ENCODE measurements at regions of chr3 and their contacts with region 1.

Region 1: GRCh38 chr3:45688882-45689756 is at the start of gene SACM1L:
- DNase-seq: peak; percentile 96
- H3K4me3 Mint-ChIP-seq: peak within 1 kb of the TSS; percentile 95
- H3K27ac Mint-ChIP-seq: peak within 1 kb of the TSS; percentile 100
- H3K4me1 Mint-ChIP-seq: peaks cover 59% of the 10 kb centered on the region
- H3K27me3 Mint-ChIP-seq: peaks cover 4% of the 10 kb centered on the region
- total RNA-seq, gene SACM1L: 112 and 114 TPM in 2 replicates

Region 2: DNA sequence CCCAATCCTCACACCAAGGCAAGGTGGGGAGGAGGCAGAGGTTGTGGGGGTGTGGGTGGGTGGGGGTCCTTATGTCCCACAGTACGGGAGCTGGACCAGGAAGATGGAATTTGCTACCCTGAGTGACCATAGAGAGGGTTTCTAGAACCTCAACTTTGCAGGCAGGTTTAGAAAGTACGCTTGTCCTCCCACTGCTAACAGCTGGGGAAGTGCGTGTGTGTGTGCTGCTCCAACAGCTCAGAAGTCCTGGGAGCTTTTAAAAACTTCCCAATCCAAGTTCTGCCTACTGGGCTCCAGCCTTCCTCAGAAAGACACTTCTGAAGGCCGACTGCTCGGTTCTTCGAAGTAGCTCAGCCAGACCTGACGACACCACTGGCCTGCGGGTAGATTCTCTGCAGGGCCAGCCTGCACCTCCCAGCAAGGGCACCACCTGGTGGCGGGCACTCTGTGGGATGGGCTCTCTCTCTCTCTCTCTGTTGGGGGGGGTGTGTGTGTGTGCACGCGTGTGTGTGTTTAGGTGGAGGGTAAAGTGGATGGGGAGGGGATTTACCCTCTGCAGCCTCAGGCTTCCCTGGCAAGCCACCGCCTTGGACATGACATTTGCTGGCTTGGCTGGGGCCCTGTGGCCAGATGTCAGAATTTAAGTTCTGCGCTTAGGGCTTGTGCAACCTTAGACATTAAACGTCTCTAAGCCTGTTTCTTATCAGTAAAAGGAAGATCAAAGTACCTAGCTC is 478.6 kb before region 1 on chr3:
- intact Hi-C with region 1: no loop called
- DNase-seq: peak; percentile 67
- H3K4me3 Mint-ChIP-seq: no peak overlapping the region
- H3K27ac Mint-ChIP-seq: no peak overlapping the region
- H3K4me1 Mint-ChIP-seq: peaks cover 14% of the 10 kb centered on the region
- H3K27me3 Mint-ChIP-seq: peaks cover 29% of the 10 kb centered on the region

Region 3: DNA sequence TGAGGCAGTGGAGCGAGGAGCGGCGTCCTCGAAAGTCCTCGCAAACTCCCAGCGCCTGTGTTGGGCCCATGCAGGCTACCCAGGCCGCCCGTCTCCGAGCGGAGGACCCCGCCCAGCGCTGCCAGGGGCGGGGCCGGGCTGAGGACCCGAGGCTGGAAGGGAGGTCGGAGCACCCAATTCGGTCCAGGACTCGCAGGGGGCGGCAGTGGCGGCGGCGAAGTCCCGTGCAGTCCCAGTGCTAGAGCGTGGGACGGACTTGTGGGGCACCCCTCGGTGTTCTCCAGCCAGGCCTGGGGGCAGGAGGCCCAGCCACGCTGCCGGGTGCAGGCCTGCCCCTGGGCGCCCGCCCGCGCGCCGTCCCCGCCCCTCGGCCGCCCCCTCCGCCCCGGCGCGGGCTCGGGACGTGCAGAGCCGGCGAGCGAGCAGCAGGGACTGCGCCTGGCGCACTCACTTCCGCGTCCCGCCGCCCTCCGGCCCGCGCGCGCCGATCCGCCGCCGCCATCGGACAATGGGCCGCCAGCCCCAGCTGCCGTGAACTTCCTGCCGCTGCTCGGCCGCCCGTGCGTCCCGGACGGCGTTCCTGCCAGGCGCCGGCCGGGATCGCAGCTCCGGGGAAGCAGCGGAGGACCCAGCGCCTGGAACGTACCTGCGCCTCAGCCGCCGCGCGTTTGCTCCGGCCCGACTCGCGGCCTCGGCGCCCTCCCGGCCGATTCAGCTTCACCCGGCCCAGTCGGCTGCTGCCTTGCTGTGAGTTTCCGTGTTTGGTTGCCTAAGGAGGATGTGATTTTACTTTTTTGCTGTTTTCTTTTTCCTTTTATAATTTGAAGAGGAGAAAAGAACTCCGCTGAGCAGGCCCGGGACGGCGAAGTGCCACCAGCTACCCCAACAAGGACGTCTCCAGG is 95.2 kb before region 1 on chr3:
- intact Hi-C with region 1: loop called (anchors 1 kb)
- DNase-seq: peak; percentile 76
- H3K4me3 Mint-ChIP-seq: peak overlapping the region; percentile 89
- H3K27ac Mint-ChIP-seq: peak overlapping the region; percentile 87
- H3K4me1 Mint-ChIP-seq: peaks cover 52% of the 10 kb centered on the region
- H3K27me3 Mint-ChIP-seq: peaks cover 6% of the 10 kb centered on the region

Region 4: GRCh38 chr3:45677033-45677433 is 12.1 kb before region 1 on chr3:
- intact Hi-C with region 1: loop called (anchors 1 kb)
- DNase-seq: peak; percentile 31
- H3K4me3 Mint-ChIP-seq: peak overlapping the region; percentile 61
- H3K27ac Mint-ChIP-seq: peak overlapping the region; percentile 88
- H3K4me1 Mint-ChIP-seq: peaks cover 15% of the 10 kb centered on the region
- H3K27me3 Mint-ChIP-seq: no peaks in the 10 kb centered on the region

Region 5: GRCh38 chr3:45995236-45996192 is 306.4 kb after region 1 on chr3 and contains the start of gene FYCO1:
- intact Hi-C with region 1: loop called (anchors 1 kb)
- DNase-seq: peak; percentile 82
- H3K4me3 Mint-ChIP-seq: peak within 1 kb of the TSS; percentile 87
- H3K27ac Mint-ChIP-seq: peak within 1 kb of the TSS; percentile 96
- H3K4me1 Mint-ChIP-seq: peaks cover 64% of the 10 kb centered on the region
- H3K27me3 Mint-ChIP-seq: peaks cover 3% of the 10 kb centered on the region
- total RNA-seq, gene FYCO1: 16.1 and 16.3 TPM in 2 replicates

Region 6: GRCh38 chr3:46098319-46098761 is 409.2 kb after region 1 on chr3:
- intact Hi-C with region 1: loop called (anchors 5 kb)
- DNase-seq: peak; percentile 70
- H3K4me3 Mint-ChIP-seq: peak overlapping the region; percentile 71
- H3K27ac Mint-ChIP-seq: peak overlapping the region; percentile 95
- H3K4me1 Mint-ChIP-seq: peaks cover 75% of the 10 kb centered on the region
- H3K27me3 Mint-ChIP-seq: peaks cover 5% of the 10 kb centered on the region